ENCODE measurements at regions of chr1 and their contacts with region 1.

Region 1: DNA sequence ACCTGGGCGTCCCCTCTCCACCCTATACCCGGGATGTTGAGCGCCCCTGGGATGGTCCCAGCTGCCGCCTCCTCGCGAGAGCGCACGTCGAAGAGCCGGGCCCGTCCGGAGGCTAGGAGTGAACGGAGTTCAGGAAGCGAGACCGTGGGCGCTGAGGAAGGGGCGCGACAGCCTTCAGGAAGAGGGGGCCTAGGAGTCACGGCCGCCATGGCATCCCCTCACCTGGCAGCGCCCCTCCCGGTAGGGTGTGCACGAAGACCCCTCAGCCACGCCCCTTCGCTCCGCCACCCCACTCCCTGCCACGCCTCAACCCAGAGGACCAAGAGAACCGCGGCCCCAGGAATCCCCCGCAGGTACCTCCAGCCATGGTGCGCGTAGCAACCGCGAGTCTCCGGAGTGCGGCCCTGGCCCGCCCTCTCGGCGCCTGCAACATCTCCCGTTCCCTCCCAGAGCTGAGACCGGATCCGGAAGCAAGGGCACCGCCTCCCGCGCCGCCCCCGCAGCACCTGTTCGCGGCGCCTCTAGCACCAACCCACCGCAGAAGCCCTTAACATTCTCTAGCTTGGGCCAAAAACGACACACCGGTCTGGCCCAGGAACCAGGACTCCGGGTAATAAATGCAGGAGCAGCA is at the start of gene TSTD1:
- DNase-seq: peak; percentile 80
- ATAC-seq: peak; percentile 84
- H3K4me3 Mint-ChIP-seq: peak within 1 kb of the TSS; percentile 91
- H3K27ac Mint-ChIP-seq: peak within 1 kb of the TSS; percentile 95
- H3K4me1 Mint-ChIP-seq: peaks cover 53% of the 10 kb centered on the region
- H3K27me3 Mint-ChIP-seq: no peaks in the 10 kb centered on the region
- CTCF ChIP-seq: no peak
- total RNA-seq, gene TSTD1: 69.8 and 70.2 TPM in 2 replicates

Region 2: DNA sequence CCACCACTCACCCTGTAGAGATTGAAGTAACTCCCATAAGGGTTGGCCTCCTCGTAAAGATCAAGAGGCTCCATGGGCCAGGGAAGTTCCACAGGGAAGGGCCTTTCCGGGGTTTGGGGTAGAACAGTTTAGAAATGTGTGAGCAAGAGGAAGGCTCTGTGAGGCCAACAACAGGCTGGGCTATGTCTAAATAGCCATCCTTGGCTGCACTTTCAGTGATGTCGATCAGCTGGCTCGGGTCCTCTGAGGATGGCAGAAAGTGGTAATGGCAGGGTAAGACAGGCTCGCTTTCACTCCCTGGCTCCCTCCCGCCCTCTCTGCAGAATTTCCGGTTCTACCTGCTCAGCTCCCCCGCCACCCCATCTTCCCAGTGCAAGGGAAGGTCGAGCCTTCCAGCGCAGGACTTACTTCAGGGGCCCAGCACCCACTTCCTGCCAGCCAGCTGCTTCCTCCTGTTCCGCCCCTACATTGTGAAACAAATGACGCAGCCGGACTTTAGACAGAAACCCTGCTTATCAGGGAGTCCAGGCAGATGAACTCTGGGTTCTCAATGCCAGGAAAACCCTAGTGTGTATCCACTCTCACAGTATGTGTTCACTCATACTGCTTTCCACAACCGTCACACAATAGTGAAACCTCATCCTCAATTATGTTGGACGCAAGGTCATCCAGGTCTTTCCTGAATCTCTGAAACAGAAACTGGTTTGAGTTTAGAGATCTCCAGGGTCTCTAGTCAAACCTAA is 25.0 kb before region 1 on chr1:
- CTCF ChIA-PET with region 1: interaction called, 3 read pairs
- POLR2A ChIA-PET with region 1: interaction called, 34 read pairs
- intact Hi-C with region 1: no loop called
- DNase-seq: peak; percentile 55
- ATAC-seq: peak; percentile 84
- H3K4me3 Mint-ChIP-seq: peak overlapping the region; percentile 87
- H3K27ac Mint-ChIP-seq: peak overlapping the region; percentile 98
- H3K4me1 Mint-ChIP-seq: peaks cover 23% of the 10 kb centered on the region
- H3K27me3 Mint-ChIP-seq: no peaks in the 10 kb centered on the region
- CTCF ChIP-seq: no peak

Region 3: GRCh38 chr1:161021165-161021960 is 17.3 kb before region 1 on chr1:
- CTCF ChIA-PET with region 1: interaction called, 9 read pairs
- POLR2A ChIA-PET with region 1: interaction called, 41 read pairs
- intact Hi-C with region 1: loop called (anchors 1 kb)
- DNase-seq: peak; percentile 74
- ATAC-seq: peak; percentile 92
- H3K4me3 Mint-ChIP-seq: peak overlapping the region; percentile 95
- H3K27ac Mint-ChIP-seq: peak overlapping the region; percentile 91
- H3K4me1 Mint-ChIP-seq: peaks cover 27% of the 10 kb centered on the region
- H3K27me3 Mint-ChIP-seq: no peaks in the 10 kb centered on the region
- CTCF ChIP-seq: no peak

Region 4: DNA sequence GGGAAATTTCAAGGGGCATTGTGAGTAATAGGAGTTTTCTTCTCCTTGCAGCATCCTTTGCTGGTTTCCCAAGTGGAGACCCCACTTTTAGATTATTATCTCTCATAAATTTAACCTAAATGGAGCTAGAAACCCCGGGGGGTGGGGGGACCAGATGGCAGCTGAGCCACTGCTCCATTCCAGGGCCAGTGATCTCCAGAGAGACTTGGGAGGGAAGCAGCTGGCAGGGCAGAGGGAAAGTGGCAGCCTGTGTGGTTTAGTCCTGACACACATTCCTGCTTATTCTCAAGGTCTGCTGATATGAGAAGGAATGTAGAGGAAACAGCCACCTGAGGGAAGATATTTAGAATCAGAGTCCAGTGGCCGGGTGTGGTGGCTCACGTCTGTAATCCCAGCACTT is 236.2 kb after region 1 on chr1:
- CTCF ChIA-PET with region 1: no interaction called
- POLR2A ChIA-PET with region 1: no interaction called
- intact Hi-C with region 1: no loop called
- DNase-seq: no peak
- ATAC-seq: no peak
- H3K4me3 Mint-ChIP-seq: no peak overlapping the region
- H3K27ac Mint-ChIP-seq: no peak overlapping the region
- H3K4me1 Mint-ChIP-seq: no peaks in the 10 kb centered on the region
- H3K27me3 Mint-ChIP-seq: peaks cover 11% of the 10 kb centered on the region
- CTCF ChIP-seq: no peak

Region 5: GRCh38 chr1:161287482-161288054 is 248.9 kb after region 1 on chr1:
- CTCF ChIA-PET with region 1: no interaction called
- POLR2A ChIA-PET with region 1: no interaction called
- intact Hi-C with region 1: no loop called
- DNase-seq: no peak
- ATAC-seq: no peak
- H3K4me3 Mint-ChIP-seq: no peak overlapping the region
- H3K27ac Mint-ChIP-seq: no peak overlapping the region
- H3K4me1 Mint-ChIP-seq: peaks cover 6% of the 10 kb centered on the region
- H3K27me3 Mint-ChIP-seq: no peaks in the 10 kb centered on the region
- CTCF ChIP-seq: no peak

Measured in activated B cell treated with CpG ODN at 0.5 μM for 24 hours (primary cell).